ENCODE measurements at regions of chr2 and their contacts with region 1.

Region 1: GRCh38 chr2:237012577-237013267 is 73.0 kb upstream of the COPS8 start:
- DNase-seq: peak; percentile 31
- H3K4me3 Mint-ChIP-seq: peak overlapping the region; percentile 3
- H3K27ac Mint-ChIP-seq: peak overlapping the region; percentile 81
- H3K4me1 Mint-ChIP-seq: peaks cover 42% of the 10 kb centered on the region
- H3K27me3 Mint-ChIP-seq: no peaks in the 10 kb centered on the region
- CTCF ChIP-seq: no peak

Region 2: GRCh38 chr2:236998236-236998635 is 14.5 kb before region 1 on chr2:
- CTCF ChIA-PET with region 1: interaction called, 4 read pairs
- intact Hi-C with region 1: loop called (anchors 1 kb)
- DNase-seq: no peak
- H3K4me3 Mint-ChIP-seq: peak overlapping the region; percentile 43
- H3K27ac Mint-ChIP-seq: peak overlapping the region; percentile 76
- H3K4me1 Mint-ChIP-seq: peaks cover 50% of the 10 kb centered on the region
- H3K27me3 Mint-ChIP-seq: no peaks in the 10 kb centered on the region
- CTCF ChIP-seq: no peak